ENCODE measurements at regions of chr1 and their contacts with region 1.

Region 1: DNA sequence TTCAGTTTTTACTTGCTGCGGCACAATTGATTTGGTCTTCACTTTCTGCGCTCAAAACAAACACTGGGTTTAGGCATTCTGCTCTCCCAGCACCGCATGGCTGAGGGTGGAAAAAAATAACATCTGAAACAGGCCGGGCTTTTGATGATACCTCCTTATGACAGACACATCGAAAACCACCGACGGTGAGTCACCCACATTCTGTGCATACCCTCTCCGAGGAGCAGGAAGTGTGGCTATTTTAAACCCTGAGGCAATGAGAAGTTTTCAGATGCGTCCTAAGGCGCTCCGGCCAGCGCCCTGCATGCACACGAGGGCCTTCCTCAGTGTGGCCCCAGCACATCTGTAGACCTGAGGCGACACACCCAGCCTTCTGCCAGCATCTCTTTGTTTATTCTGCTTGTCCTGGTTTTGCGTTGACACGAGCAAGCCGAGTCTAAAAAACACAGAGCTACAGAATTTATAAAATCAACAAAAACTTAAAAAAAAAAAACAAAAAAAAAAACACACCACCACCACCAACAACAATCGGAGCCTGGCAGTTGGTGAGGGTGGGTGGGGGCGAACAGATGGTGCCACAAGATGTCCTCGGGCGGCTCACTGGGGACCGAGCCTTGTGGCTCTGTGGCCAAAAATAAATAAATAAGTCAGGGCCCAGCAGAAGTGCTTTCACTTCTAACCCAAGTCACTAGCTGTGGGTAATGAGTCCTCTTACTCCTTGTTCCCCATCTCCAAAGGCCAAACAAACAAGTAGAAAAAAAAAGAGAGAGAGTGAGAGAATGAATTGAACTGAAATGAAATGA is 162.6 kb upstream of the IRF2BP2 start:
- DNase-seq: peak; percentile 56 to 95 (median 78)
- ATAC-seq: peak; percentile 82
- H3K4me3 ChIP-seq: peak overlapping the region; percentile 21
- H3K4me3 Mint-ChIP-seq: peak overlapping the region; percentile 42
- H3K27ac ChIP-seq: peak overlapping the region; percentile 59 to 72
- H3K27ac Mint-ChIP-seq: peak overlapping the region; percentile 87
- H3K4me1 ChIP-seq: peaks cover 53% of the 10 kb centered on the region
- H3K4me1 Mint-ChIP-seq: peaks cover 56% of the 10 kb centered on the region
- H3K27me3 ChIP-seq: peaks cover 4 to 12% of the 10 kb centered on the region in 2 experiments
- H3K27me3 Mint-ChIP-seq: no peaks in the 10 kb centered on the region
- CTCF ChIP-seq: no peak

Region 2: GRCh38 chr1:234758851-234759250 is 13.7 kb before region 1 on chr1:
- CTCF ChIA-PET with region 1: interaction called, 4 read pairs
- POLR2A ChIA-PET with region 1: interaction called, 9 read pairs
- intact Hi-C with region 1: loop called in 1 of 2 experiments (anchors 1 kb)
- DNase-seq: peak in 10 of 14 experiments; percentile 19 to 90 (median 46)
- ATAC-seq: peak; percentile 85
- H3K4me3 ChIP-seq: no peak overlapping the region
- H3K4me3 Mint-ChIP-seq: peak overlapping the region; percentile 31
- H3K27ac ChIP-seq: no peak overlapping the region
- H3K27ac Mint-ChIP-seq: peak overlapping the region; percentile 93
- H3K4me1 ChIP-seq: peaks cover 37% of the 10 kb centered on the region
- H3K4me1 Mint-ChIP-seq: peaks cover 58% of the 10 kb centered on the region
- H3K27me3 ChIP-seq: no peaks in the 10 kb centered on the region
- H3K27me3 Mint-ChIP-seq: no peaks in the 10 kb centered on the region
- CTCF ChIP-seq: no peak

Region 3: DNA sequence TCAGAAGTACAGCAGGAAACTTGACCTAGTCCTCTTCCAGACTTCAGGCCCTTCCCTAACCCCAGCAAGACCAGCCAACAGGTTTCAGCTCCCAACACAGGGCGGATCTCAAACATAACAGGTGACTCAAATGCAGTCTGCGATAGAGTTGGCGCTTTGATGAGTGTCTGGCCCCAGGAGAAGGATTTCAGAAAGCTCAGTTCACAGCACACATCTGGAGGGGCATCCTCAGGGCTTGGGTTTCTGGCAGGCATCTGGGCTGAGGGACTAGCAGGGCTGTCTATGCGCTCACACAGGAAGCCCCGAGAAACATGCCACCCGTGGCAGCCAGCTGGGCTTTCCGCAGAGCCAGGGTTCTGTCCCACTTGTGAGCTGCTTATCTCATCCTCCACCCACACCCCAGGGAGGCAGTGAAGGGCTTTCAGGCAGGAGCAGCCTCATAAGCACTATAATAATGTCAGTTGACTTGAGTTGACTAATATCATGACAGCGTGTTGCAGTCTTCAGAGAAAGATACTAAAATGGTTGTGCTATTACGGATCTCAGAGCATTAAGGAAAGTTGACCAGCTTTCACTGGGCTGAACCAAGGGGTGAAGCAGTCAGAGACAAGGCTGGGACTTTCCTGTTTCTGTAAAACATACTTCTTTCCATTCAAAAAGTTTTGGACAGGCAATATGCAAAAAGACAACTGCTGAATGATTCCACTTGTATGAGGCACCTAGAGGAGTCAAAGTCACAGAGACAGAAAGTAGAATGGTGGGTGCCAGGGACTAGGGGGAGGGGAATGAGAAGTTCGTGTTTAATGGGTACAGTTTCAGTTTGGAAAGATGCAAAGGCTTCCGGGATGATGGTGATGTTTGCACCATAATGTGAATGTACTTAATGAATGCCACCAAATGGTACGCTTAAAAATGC is 70.4 kb after region 1 on chr1:
- CTCF ChIA-PET with region 1: interaction called, 4 read pairs
- POLR2A ChIA-PET with region 1: interaction called, 5 read pairs
- intact Hi-C with region 1: loop called (anchors 1 to 2 kb)
- DNase-seq: peak; percentile 20 to 82 (median 42)
- ATAC-seq: peak; percentile 31
- H3K4me3 ChIP-seq: peak overlapping the region; percentile 10
- H3K4me3 Mint-ChIP-seq: peak overlapping the region; percentile 9
- H3K27ac ChIP-seq: no peak overlapping the region
- H3K27ac Mint-ChIP-seq: peak overlapping the region; percentile 81
- H3K4me1 ChIP-seq: peaks cover 41% of the 10 kb centered on the region
- H3K4me1 Mint-ChIP-seq: peaks cover 78% of the 10 kb centered on the region
- H3K27me3 ChIP-seq: no peaks in the 10 kb centered on the region
- H3K27me3 Mint-ChIP-seq: no peaks in the 10 kb centered on the region
- CTCF ChIP-seq: no peak

Region 4: DNA sequence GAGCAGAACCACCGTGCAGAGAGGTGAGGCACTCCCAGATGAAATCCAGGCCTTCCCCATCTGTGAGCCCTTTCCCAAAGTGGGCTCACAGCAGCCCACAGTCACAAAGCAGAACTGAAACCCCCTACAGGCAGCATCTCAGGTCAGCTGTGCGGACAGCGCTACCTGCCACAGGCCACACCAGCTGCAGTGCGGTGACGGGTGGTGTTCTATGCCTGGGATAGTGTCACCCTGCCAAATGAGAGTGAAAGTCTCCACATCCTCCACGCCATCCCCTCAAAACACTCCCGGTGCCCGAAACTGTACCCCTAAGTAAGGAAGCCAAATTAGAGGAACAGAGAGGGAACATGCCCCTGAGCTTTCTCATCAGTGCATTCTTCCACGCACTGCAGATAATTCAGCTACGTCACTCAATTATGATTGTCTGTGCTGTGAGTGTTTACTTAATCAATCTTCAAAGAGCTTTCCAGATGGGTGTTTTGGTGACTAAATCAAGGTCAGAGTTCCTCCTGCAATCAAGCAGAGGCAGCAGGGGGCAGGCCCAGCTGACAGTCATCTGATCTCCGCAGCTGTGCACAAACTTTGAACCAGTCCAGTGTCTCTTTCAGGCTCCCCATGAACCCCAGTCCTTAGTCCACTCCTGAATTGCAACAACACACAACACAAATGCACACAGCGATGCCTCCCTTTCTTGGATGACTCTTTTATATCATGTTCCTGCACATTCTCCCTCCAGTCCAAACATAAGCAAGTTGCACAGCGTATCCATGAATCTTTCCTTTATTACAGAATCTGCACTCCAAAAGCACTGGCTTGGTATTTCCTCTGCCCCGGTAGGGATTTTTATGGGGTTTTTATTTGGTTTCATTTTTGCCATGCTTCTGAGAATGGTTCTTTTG is 206.1 kb after region 1 on chr1:
- CTCF ChIA-PET with region 1: no interaction called
- POLR2A ChIA-PET with region 1: no interaction called
- intact Hi-C with region 1: no loop called
- DNase-seq: peak in 13 of 14 experiments; percentile 30 to 89 (median 55)
- ATAC-seq: peak; percentile 79
- H3K4me3 ChIP-seq: no peak overlapping the region
- H3K4me3 Mint-ChIP-seq: peak overlapping the region; percentile 82
- H3K27ac ChIP-seq: peak overlapping the region; percentile 63 to 72
- H3K27ac Mint-ChIP-seq: peak overlapping the region; percentile 93
- H3K4me1 ChIP-seq: peaks cover 53% of the 10 kb centered on the region
- H3K4me1 Mint-ChIP-seq: peaks cover 65% of the 10 kb centered on the region
- H3K27me3 ChIP-seq: no peaks in the 10 kb centered on the region
- H3K27me3 Mint-ChIP-seq: no peaks in the 10 kb centered on the region
- CTCF ChIP-seq: peak; percentile 18

Region 5: DNA sequence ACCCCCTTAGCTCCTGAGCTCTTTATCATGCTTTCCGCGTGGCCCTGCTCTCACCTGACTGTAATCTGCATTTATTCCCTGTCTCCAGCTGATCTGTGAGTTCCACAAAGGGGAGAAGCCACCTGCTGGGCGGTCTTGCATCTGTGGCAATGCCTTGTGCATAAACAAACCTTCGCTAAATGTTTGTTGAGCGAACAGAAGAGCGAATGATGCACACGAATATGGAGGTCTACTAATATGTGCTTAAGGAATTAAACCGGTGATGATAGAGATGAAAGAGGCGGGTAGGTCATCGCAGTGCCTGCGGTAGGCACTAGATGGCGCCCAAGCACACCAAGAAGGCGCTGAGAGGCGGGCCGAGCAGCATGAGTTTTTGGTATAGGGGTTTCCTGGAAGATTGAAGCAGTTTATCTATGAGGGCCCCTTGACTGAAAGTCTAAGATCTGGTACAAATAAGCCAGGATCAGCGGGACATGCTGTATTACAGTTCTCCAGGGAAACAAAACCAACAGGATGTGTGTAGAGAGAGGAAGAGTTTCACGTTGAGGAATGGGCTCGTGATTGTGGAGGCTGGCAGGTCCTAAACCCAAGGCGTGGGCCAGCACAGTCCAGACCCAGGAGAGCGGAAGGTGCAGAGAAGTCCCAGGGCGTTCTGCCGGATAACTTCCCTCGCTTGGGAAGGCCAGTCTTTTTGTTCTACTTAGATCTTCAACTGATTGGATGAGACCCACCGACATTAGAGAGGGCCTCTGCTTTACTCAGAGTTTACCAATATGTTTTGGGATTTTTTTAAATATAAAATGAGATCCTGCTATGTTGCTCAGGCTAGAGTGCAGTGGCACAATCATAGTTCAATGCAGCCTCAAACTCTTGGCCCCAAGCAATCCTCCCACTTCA is 321.4 kb after region 1 on chr1:
- CTCF ChIA-PET with region 1: no interaction called
- POLR2A ChIA-PET with region 1: no interaction called
- intact Hi-C with region 1: no loop called
- DNase-seq: peak; percentile 75 to 90 (median 82)
- ATAC-seq: peak; percentile 100
- H3K4me3 ChIP-seq: no peak overlapping the region
- H3K4me3 Mint-ChIP-seq: no peak overlapping the region
- H3K27ac ChIP-seq: no peak overlapping the region
- H3K27ac Mint-ChIP-seq: no peak overlapping the region
- H3K4me1 ChIP-seq: peaks cover 9% of the 10 kb centered on the region
- H3K4me1 Mint-ChIP-seq: peaks cover 6% of the 10 kb centered on the region
- H3K27me3 ChIP-seq: no peaks in the 10 kb centered on the region
- H3K27me3 Mint-ChIP-seq: peaks cover 6% of the 10 kb centered on the region
- CTCF ChIP-seq: peak; percentile 94